OCI-LY7 (cell line): ENCODE measurements at regions of chr3 and their contacts with region 1.

Region 1: GRCh38 chr3:141913150-141913811 is 36.8 kb downstream of the ATP1B3 start:
- DNase-seq: peak; percentile 72
- H3K4me3 ChIP-seq: no peak overlapping the region
- H3K27ac ChIP-seq: no peak overlapping the region
- H3K4me1 ChIP-seq: no peaks in the 10 kb centered on the region
- CTCF ChIP-seq: peak; percentile 87

Region 2: DNA sequence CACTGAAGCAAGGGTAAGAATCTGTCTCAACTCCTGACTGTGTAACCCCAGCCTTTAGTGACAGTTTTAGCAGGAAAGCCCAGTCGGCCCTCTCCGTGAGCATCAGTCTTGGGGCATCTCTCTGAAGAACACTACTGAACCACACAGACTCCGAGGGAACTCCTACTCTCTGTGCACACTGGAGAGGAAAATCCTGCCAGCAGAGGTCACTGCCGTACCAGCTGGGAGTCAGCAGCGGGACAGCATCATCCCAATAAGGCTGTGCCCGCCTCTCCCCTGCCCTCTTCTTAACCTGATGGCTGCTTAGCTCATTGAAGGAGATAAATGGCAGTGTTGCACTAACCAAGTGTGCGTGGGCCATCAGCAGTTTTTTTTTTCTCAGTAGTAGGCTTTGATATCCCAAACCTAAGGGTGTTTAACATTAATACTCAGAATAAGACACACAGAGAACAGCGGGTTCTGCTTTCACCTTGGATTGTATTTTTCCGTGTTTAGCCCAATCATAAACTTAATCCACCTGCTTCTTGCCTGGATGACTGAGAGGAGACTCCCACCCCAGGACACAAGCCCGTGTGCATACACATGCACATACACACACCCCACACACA is 453.1 kb before region 1 on chr3:
- CTCF ChIA-PET with region 1: no interaction called
- POLR2A ChIA-PET with region 1: no interaction called
- intact Hi-C with region 1: loop called (anchors 10 kb)
- DNase-seq: peak; percentile 77
- H3K4me3 ChIP-seq: no peak overlapping the region
- H3K27ac ChIP-seq: no peak overlapping the region
- H3K4me1 ChIP-seq: no peaks in the 10 kb centered on the region
- CTCF ChIP-seq: peak; percentile 88

Region 3: GRCh38 chr3:141575879-141576743 is 337.2 kb before region 1 on chr3:
- CTCF ChIA-PET with region 1: no interaction called
- POLR2A ChIA-PET with region 1: no interaction called
- intact Hi-C with region 1: loop called (anchors 10 kb)
- DNase-seq: peak; percentile 37
- H3K4me3 ChIP-seq: no peak overlapping the region
- H3K27ac ChIP-seq: no peak overlapping the region
- H3K4me1 ChIP-seq: peaks cover 7% of the 10 kb centered on the region
- CTCF ChIP-seq: peak; percentile 82